ENCODE measurements at regions of chr16 and their contacts with region 1.

Region 1: GRCh38 chr16:28491970-28492474 is at the start of gene CLN3:
- DNase-seq: peak; percentile 94 to 96
- ATAC-seq: peak; percentile 97
- H3K4me3 ChIP-seq: peak within 1 kb of the TSS; percentile 75 to 81
- H3K27ac ChIP-seq: peak within 1 kb of the TSS; percentile 59 to 95
- H3K4me1 ChIP-seq: no peaks in the 10 kb centered on the region
- H3K27me3 ChIP-seq: no peaks in the 10 kb centered on the region
- total RNA-seq, gene CLN3: 15.6 to 27.2 TPM

Region 2: GRCh38 chr16:28538733-28539596 is 46.9 kb after region 1 on chr16 and contains the start of gene NUPR1:
- intact Hi-C with region 1: loop called (anchors 5 kb)
- DNase-seq: peak; percentile 95 to 96
- ATAC-seq: peak; percentile 96
- H3K4me3 ChIP-seq: peak within 1 kb of the TSS; percentile 37 to 39
- H3K27ac ChIP-seq: peak within 1 kb of the TSS; percentile 31 to 87
- H3K4me1 ChIP-seq: peaks cover 0 to 1% of the 10 kb centered on the region in 2 donors
- H3K27me3 ChIP-seq: no peaks in the 10 kb centered on the region
- total RNA-seq, gene NUPR1: 85.3 to 137 TPM

Region 3: GRCh38 chr16:28553776-28554633 is 62.0 kb after region 1 on chr16 and contains the start of gene SGF29:
- intact Hi-C with region 1: loop called (anchors 5 kb)
- DNase-seq: peak; percentile 96 to 98
- ATAC-seq: peak; percentile 98
- H3K4me3 ChIP-seq: peak within 1 kb of the TSS; percentile 37 to 54
- H3K27ac ChIP-seq: peak within 1 kb of the TSS in 1 of 2 donors; percentile 98
- H3K4me1 ChIP-seq: peaks cover 0 to 3% of the 10 kb centered on the region in 2 donors
- H3K27me3 ChIP-seq: no peaks in the 10 kb centered on the region
- total RNA-seq, gene SGF29: 19.7 to 20.7 TPM

Measured in aorta (tissue), 5 donors.